ENCODE measurements at regions of chr5 and their contacts with region 1.

Region 1: DNA sequence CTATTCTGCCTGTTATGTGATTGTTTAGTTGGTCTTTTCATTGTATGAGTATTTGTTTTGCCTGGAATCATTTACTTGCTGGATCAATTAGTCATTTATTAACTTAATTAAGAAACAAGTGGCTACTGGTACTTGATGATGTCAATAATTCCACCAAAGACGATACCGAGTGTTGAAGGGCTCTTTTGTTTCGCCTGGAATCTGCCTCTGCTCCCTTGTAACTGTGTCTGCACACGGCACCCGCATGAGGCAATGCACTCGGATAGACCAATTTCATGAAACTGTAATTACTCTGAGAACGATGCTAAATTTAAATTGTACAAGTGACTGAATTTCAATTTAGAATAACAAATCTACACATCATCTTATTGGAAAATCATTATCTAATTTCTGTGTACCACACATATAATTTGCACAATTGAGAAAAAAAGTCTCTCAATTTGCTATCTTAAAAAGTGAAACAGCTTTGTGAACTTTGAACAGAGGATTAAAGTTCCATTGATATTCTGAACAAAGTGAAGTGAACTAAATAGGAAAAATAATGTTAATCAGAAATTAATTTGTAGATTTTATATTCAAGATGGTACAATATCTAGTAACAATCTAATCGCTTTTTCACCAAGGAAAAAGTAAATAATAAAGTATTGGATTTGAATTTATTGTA is 143.2 kb downstream of the CTNND2 start:
- DNase-seq: no peak
- H3K4me3 ChIP-seq: no peak overlapping the region
- H3K27ac ChIP-seq: no peak overlapping the region
- H3K4me1 ChIP-seq: no peaks in the 10 kb centered on the region
- H3K27me3 ChIP-seq: no peaks in the 10 kb centered on the region
- CTCF ChIP-seq: no peak
- POLR2A ChIP-seq: no peak

Region 2: DNA sequence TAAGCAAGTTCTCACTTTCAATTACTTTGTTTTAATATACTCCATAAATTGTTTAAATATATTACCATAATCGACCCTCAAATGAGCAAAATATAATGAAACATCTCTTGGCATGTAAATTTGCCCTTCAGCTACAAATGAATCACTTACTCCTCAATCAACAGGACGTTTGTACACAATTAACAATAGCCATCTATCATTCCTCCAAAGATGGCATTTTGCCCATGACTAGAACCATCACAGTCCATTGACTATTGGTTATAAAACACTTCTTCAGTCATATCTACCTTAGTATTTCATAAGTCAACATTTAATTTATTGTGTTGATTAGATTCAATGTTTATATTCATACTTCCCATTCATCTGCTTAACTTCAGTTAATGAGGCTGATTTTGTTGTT is 16.0 kb after region 1 on chr5:
- intact Hi-C with region 1: no loop called
- DNase-seq: no peak
- H3K4me3 ChIP-seq: no peak overlapping the region
- H3K27ac ChIP-seq: no peak overlapping the region
- H3K4me1 ChIP-seq: no peaks in the 10 kb centered on the region
- H3K27me3 ChIP-seq: no peaks in the 10 kb centered on the region
- CTCF ChIP-seq: no peak
- POLR2A ChIP-seq: no peak

Region 3: GRCh38 chr5:13478831-13479465 is 1717.9 kb after region 1 on chr5:
- intact Hi-C with region 1: loop called (anchors 10 kb)
- DNase-seq: no peak
- H3K4me3 ChIP-seq: no peak overlapping the region
- H3K27ac ChIP-seq: no peak overlapping the region
- H3K4me1 ChIP-seq: no peaks in the 10 kb centered on the region
- H3K27me3 ChIP-seq: no peaks in the 10 kb centered on the region
- CTCF ChIP-seq: peak in 2 of 3 donors; percentile 37 to 55
- POLR2A ChIP-seq: no peak

Measured in breast epithelium (tissue), 4 donors.